HepG2 (cell line): ENCODE measurements at regions of chr19 and their contacts with region 1.

Region 1: GRCh38 chr19:45059278-45059965 is 16.9 kb downstream of the ZNF296 start:
- DNase-seq: peak; percentile 78
- ATAC-seq: peak; percentile 82
- H3K4me3 ChIP-seq: no peak overlapping the region
- H3K27ac ChIP-seq: no peak overlapping the region
- H3K4me1 ChIP-seq: no peaks in the 10 kb centered on the region
- H3K27me3 ChIP-seq: no peaks in the 10 kb centered on the region
- CTCF ChIP-seq: peak; percentile 95
- EP300 ChIP-seq: no peak
- POLR2A ChIP-seq: no peak
- RAD21 ChIP-seq: peak; percentile 95

Region 2: GRCh38 chr19:45016388-45017319 is 42.8 kb before region 1 on chr19:
- CTCF ChIA-PET with region 1: interaction called, 40 read pairs
- POLR2A ChIA-PET with region 1: no interaction called
- in situ Hi-C with region 1: loop called (anchors 5 kb)
- intact Hi-C with region 1: loop called (anchors 1 kb)
- DNase-seq: peak; percentile 78
- ATAC-seq: peak; percentile 96
- H3K4me3 ChIP-seq: no peak overlapping the region
- H3K27ac ChIP-seq: no peak overlapping the region
- H3K4me1 ChIP-seq: 0 out of 2 replicates have a peak, but pooled peaks cover 9% of the 10 kb centered on the region
- H3K27me3 ChIP-seq: no peaks in the 10 kb centered on the region
- CTCF ChIP-seq: peak; percentile 86
- EP300 ChIP-seq: no peak
- POLR2A ChIP-seq: no peak
- RAD21 ChIP-seq: peak; percentile 90

Region 3: DNA sequence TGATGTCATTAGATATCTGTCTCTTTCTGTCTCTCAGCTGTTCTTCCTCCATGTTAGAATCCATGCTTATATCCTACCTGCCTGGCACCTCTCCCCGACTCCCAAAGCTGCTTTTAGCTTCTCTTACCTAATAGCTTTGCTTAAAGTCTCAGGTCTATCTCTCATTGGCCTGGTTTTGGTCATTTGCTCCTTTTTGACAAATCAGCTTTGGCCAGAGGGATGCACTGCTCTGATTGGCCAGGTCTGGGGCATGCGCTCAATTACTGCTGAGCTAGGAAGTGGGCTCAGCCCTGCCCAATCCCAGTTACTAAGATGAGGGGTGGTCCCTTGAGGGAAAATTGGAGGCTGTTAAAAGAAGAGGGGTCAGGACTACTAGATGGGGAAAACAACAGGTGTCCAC is 32.1 kb before region 1 on chr19:
- CTCF ChIA-PET with region 1: no interaction called
- POLR2A ChIA-PET with region 1: no interaction called
- in situ Hi-C with region 1: no loop called
- intact Hi-C with region 1: no loop called
- DNase-seq: no peak
- ATAC-seq: peak; percentile 30; the same call in 1 of the 3 replicates
- H3K4me3 ChIP-seq: no peak overlapping the region
- H3K27ac ChIP-seq: no peak overlapping the region
- H3K4me1 ChIP-seq: peaks cover 14% of the 10 kb centered on the region
- H3K27me3 ChIP-seq: no peaks in the 10 kb centered on the region
- CTCF ChIP-seq: no peak
- EP300 ChIP-seq: no peak
- POLR2A ChIP-seq: no peak
- RAD21 ChIP-seq: no peak

Region 4: GRCh38 chr19:45038931-45039893 is 20.2 kb before region 1 on chr19 and contains the start of gene CLASRP:
- CTCF ChIA-PET with region 1: no interaction called
- POLR2A ChIA-PET with region 1: interaction called, 11 read pairs
- in situ Hi-C with region 1: no loop called
- intact Hi-C with region 1: no loop called
- DNase-seq: peak; percentile 71
- ATAC-seq: peak; percentile 97
- H3K4me3 ChIP-seq: peak within 1 kb of the TSS; percentile 94 to 100 (median 95)
- H3K27ac ChIP-seq: peak within 1 kb of the TSS; percentile 91
- H3K4me1 ChIP-seq: peaks cover 48% of the 10 kb centered on the region
- H3K27me3 ChIP-seq: no peaks in the 10 kb centered on the region; a peak in 1 of 5 replicates
- CTCF ChIP-seq: no peak
- EP300 ChIP-seq: no peak
- POLR2A ChIP-seq: peak; percentile 78 to 91
- RAD21 ChIP-seq: no peak
- total RNA-seq, gene CLASRP: 7.4 and 32.0 TPM in 2 replicates

Region 5: GRCh38 chr19:45123430-45123850 is 64.0 kb after region 1 on chr19:
- CTCF ChIA-PET with region 1: no interaction called
- POLR2A ChIA-PET with region 1: no interaction called
- in situ Hi-C with region 1: no loop called
- intact Hi-C with region 1: no loop called
- DNase-seq: no peak
- ATAC-seq: no peak
- H3K4me3 ChIP-seq: no peak overlapping the region
- H3K27ac ChIP-seq: no peak overlapping the region
- H3K4me1 ChIP-seq: peaks cover 5% of the 10 kb centered on the region
- H3K27me3 ChIP-seq: no peaks in the 10 kb centered on the region
- CTCF ChIP-seq: no peak
- EP300 ChIP-seq: no peak
- POLR2A ChIP-seq: no peak
- RAD21 ChIP-seq: no peak